Heart right ventricle (tissue), 16 donors: ENCODE measurements at regions of chr3 and their contacts with region 1.

Region 1: GRCh38 chr3:193780810-193781472 is 187.9 kb downstream of the OPA1 start:
- DNase-seq: peak; percentile 72 to 75
- ATAC-seq: peak; percentile 85 to 95 (median 92)
- H3K4me3 ChIP-seq: no peak overlapping the region
- H3K27ac ChIP-seq: no peak overlapping the region
- H3K4me1 ChIP-seq: peaks cover 3 to 22% (median 8%) of the 10 kb centered on the region in 9 donors
- H3K27me3 ChIP-seq: peaks cover 4 to 81% (median 59%) of the 10 kb centered on the region in 7 donors
- CTCF ChIP-seq: peak; percentile 70 to 93 (median 80)

Region 2: GRCh38 chr3:194323785-194324735 is 543.1 kb after region 1 on chr3:
- intact Hi-C with region 1: loop called in 2 of 10 experiments (anchors 2 to 5 kb)
- DNase-seq: peak; percentile 86 to 87
- ATAC-seq: peak; percentile 85 to 95 (median 91)
- H3K4me3 ChIP-seq: peak overlapping the region in 8 of 10 donors; percentile 0 to 48 (median 42)
- H3K27ac ChIP-seq: peak overlapping the region; percentile 52 to 96 (median 84)
- H3K4me1 ChIP-seq: peaks cover 0 to 13% (median 0%) of the 10 kb centered on the region in 9 donors
- H3K27me3 ChIP-seq: peaks cover 0 to 50% (median 35%) of the 10 kb centered on the region in 7 donors
- CTCF ChIP-seq: no peak